ENCODE measurements at regions of chr6 and their contacts with region 1.

Region 1: GRCh38 chr6:27838058-27838944 is 73.9 kb downstream of the OR2B2 start:
- DNase-seq: peak; percentile 84
- ATAC-seq: peak; percentile 84
- H3K4me3 Mint-ChIP-seq: no peak overlapping the region
- H3K27ac Mint-ChIP-seq: no peak overlapping the region
- H3K4me1 Mint-ChIP-seq: peaks cover 28% of the 10 kb centered on the region
- H3K27me3 Mint-ChIP-seq: no peaks in the 10 kb centered on the region
- CTCF ChIP-seq: no peak

Region 2: GRCh38 chr6:27132532-27133280 is 705.6 kb before region 1 on chr6:
- CTCF ChIA-PET with region 1: no interaction called
- POLR2A ChIA-PET with region 1: interaction called, 14 read pairs
- DNase-seq: peak; percentile 85
- ATAC-seq: peak; percentile 86
- H3K4me3 Mint-ChIP-seq: no peak overlapping the region
- H3K27ac Mint-ChIP-seq: no peak overlapping the region
- H3K4me1 Mint-ChIP-seq: peaks cover 65% of the 10 kb centered on the region
- H3K27me3 Mint-ChIP-seq: no peaks in the 10 kb centered on the region
- CTCF ChIP-seq: no peak

Region 3: GRCh38 chr6:27726620-27727023 is 111.7 kb before region 1 on chr6:
- CTCF ChIA-PET with region 1: no interaction called
- POLR2A ChIA-PET with region 1: no interaction called
- DNase-seq: peak; percentile 61
- ATAC-seq: peak; percentile 95
- H3K4me3 Mint-ChIP-seq: no peak overlapping the region
- H3K27ac Mint-ChIP-seq: no peak overlapping the region
- H3K4me1 Mint-ChIP-seq: peaks cover 11% of the 10 kb centered on the region
- H3K27me3 Mint-ChIP-seq: peaks cover 48% of the 10 kb centered on the region
- CTCF ChIP-seq: no peak

Region 4: GRCh38 chr6:27825025-27825793 is 13.1 kb before region 1 on chr6:
- CTCF ChIA-PET with region 1: no interaction called
- POLR2A ChIA-PET with region 1: interaction called, 39 read pairs
- DNase-seq: no peak
- ATAC-seq: no peak
- H3K4me3 Mint-ChIP-seq: peak overlapping the region; percentile 86
- H3K27ac Mint-ChIP-seq: peak overlapping the region; percentile 99
- H3K4me1 Mint-ChIP-seq: peaks cover 27% of the 10 kb centered on the region
- H3K27me3 Mint-ChIP-seq: no peaks in the 10 kb centered on the region
- CTCF ChIP-seq: no peak

Region 5: GRCh38 chr6:27854421-27854820 is 16.1 kb after region 1 on chr6:
- CTCF ChIA-PET with region 1: interaction called, 3 read pairs
- POLR2A ChIA-PET with region 1: interaction called, 28 read pairs
- DNase-seq: no peak
- ATAC-seq: no peak
- H3K4me3 Mint-ChIP-seq: no peak overlapping the region
- H3K27ac Mint-ChIP-seq: no peak overlapping the region
- H3K4me1 Mint-ChIP-seq: peaks cover 10% of the 10 kb centered on the region
- H3K27me3 Mint-ChIP-seq: no peaks in the 10 kb centered on the region
- CTCF ChIP-seq: no peak